Activated CD4-positive, alpha-beta T cell treated with anti-CD3 and anti-CD28 coated beads, Interleukin-2, amount 10 ng/mL, durations not matched to agents 24 days and 14 days (primary cell): ENCODE measurements at regions of chr17 and their contacts with region 1.

Region 1: GRCh38 chr17:75749545-75750389 is 15.2 kb downstream of the GALK1 start:
- DNase-seq: peak; percentile 96
- H3K4me3 Mint-ChIP-seq: no peak overlapping the region
- H3K27ac Mint-ChIP-seq: no peak overlapping the region
- H3K4me1 Mint-ChIP-seq: peaks cover 18% of the 10 kb centered on the region
- H3K27me3 Mint-ChIP-seq: peaks cover 3% of the 10 kb centered on the region

Region 2: DNA sequence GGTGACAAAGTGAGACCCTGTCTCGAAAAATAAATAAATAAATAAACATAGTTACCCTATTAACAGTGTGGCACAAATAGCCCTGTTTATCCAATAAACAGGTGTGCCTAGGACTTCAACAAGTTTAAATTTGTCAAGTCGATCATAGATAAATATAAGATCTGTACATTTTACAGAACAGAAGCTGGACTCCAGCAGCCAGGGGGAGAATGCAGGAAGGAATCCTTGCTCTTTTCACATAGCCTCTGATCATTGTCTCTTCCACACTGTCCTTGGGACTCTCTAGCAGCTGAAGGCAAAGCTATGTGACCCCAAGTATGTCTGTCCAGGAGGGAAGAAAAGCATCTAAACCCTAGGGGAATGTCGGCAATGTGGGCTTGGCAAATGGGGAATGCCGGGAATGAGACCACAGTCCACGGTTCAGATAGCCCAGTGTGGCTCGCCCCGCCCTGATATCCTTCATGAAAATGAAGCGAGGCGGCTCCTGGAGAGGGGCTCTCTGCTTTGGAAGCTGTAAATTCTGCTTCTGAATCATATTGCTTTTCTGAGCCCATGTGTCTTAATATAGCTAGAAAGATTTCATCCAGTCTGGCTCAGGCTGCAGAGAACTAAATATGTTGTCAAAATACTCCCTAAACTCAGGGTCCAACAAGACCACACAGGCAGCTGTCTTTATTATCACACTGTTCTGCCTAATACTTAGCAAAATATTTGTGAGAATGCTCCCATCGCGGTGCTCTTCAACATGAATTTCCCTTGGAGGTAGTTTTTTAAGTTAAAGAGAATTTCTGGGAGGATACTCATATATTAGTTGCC is 319.4 kb before region 1 on chr17:
- intact Hi-C with region 1: loop called (anchors 10 kb)
- DNase-seq: no peak
- H3K4me3 Mint-ChIP-seq: no peak overlapping the region
- H3K27ac Mint-ChIP-seq: no peak overlapping the region
- H3K4me1 Mint-ChIP-seq: peaks cover 18% of the 10 kb centered on the region
- H3K27me3 Mint-ChIP-seq: peaks cover 15% of the 10 kb centered on the region

Region 3: GRCh38 chr17:75632863-75633485 is 116.8 kb before region 1 on chr17 and contains the start of gene SMIM5:
- intact Hi-C with region 1: loop called (anchors 1 kb)
- DNase-seq: peak; percentile 95
- H3K4me3 Mint-ChIP-seq: no peak within 1 kb of the TSS
- H3K27ac Mint-ChIP-seq: no peak within 1 kb of the TSS
- H3K4me1 Mint-ChIP-seq: peaks cover 2% of the 10 kb centered on the region
- H3K27me3 Mint-ChIP-seq: no peaks in the 10 kb centered on the region
- total RNA-seq, gene SMIM5: 0.14 and 0.38 TPM in 2 replicates

Region 4: GRCh38 chr17:75679706-75680442 is 69.9 kb before region 1 on chr17:
- intact Hi-C with region 1: loop called (anchors 1 kb)
- DNase-seq: no peak
- H3K4me3 Mint-ChIP-seq: no peak overlapping the region
- H3K27ac Mint-ChIP-seq: no peak overlapping the region
- H3K4me1 Mint-ChIP-seq: peaks cover 5% of the 10 kb centered on the region
- H3K27me3 Mint-ChIP-seq: no peaks in the 10 kb centered on the region

Region 5: DNA sequence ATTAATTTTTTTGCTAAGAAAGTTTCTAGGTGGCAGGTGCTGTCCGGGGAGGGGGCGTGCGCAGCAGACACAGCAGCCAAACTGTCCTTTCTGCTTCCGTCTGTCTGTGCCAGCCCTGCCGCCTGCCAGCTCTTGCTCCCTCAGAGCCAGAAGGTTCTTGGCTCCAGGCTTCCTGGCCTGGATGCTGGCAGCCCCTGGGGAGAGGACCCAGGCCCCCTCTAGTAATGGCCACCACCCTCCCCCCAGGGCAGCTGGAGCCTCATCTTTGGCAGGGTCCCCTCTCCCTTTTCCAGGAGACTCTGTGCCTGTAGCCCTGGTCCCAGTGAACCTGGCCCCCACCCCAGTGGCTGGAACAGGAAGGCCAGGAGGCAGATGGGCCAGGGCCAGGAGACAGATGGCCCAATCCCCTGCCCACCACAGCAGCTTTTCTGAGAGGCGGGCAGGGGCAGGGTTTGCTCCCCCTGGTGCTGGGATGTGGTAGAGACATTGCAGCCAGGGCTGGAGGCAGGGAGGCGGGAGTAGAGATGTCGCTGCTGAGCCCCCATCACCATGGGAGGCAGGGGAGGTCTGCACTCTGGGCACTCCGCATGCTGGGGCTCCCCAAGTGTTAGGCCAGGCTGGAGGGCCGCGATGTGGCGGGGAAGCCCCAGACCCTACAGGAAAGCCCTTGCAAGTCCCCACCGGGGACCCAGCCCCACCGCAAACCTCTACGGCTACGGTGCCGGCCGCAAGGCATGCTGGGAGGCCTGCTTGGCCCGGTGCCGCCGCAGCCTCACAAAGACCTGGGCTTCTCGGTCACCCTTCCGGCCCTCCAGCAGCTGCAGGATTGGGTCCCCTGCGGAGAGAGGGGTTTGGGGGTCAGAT is 77.7 kb after region 1 on chr17:
- intact Hi-C with region 1: loop called (anchors 5 kb)
- DNase-seq: peak; percentile 90
- H3K4me3 Mint-ChIP-seq: peak overlapping the region; percentile 40
- H3K27ac Mint-ChIP-seq: peak overlapping the region; percentile 89
- H3K4me1 Mint-ChIP-seq: peaks cover 7% of the 10 kb centered on the region
- H3K27me3 Mint-ChIP-seq: no peaks in the 10 kb centered on the region

Region 6: DNA sequence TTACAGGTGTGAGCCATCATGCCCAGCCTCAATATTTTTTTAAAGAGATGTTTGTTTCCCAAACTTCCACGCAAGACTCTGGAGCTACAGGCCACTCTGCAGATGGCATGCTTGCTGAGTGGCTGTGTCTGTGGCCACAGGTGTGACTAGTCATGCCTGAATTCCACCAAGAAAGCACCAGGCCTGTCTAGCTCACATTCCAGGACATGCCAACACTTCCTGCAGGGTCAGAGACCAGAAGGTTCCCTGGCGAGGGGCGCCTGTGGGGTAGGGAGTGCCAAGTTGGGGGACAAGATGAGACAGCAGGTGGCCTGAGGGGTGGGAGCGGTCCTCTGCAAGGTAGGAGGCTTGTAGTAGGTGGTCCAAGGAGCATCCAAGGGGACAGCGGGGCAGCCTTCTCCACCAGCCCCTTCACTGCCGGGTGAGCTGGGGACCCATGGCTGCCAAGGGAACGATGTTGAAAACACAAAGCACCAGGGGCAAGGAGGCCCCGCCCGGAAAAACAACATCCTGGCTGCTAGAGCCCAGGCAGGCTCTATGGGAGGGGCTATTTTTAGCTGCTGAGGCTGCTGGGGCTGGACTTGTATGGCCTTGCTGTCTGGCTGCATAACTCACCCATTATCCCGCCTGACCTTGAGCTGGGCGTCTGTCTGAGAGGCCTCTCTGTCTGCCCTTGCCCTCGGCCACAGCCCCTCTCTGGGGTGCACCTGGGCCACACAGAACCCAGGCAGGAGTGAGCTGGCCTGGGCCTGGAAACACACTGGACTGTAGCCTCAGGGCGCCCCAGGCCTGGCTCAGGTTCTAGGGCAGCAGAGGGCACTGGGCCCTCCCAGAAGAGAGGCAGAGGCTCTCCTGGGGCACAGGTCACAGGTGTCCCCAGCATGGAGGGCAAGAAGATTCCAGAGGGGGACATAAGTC is 122.9 kb after region 1 on chr17:
- intact Hi-C with region 1: no loop called
- DNase-seq: peak; percentile 93
- H3K4me3 Mint-ChIP-seq: peak overlapping the region; percentile 18
- H3K27ac Mint-ChIP-seq: peak overlapping the region; percentile 85
- H3K4me1 Mint-ChIP-seq: peaks cover 31% of the 10 kb centered on the region
- H3K27me3 Mint-ChIP-seq: no peaks in the 10 kb centered on the region